Vagina (tissue), 2 donors: ENCODE measurements at regions of chr9 and their contacts with region 1.

Region 1: GRCh38 chr9:128361986-128362646 is 9.1 kb upstream of the URM1 start:
- DNase-seq: no peak
- H3K4me3 ChIP-seq: peak overlapping the region; percentile 36 to 41
- H3K27ac ChIP-seq: peak overlapping the region; percentile 75
- H3K4me1 ChIP-seq: peaks cover 33% of the 10 kb centered on the region
- H3K27me3 ChIP-seq: no peaks in the 10 kb centered on the region
- CTCF ChIP-seq: peak; percentile 24 to 82 (median 70)
- POLR2A ChIP-seq: no peak

Region 2: DNA sequence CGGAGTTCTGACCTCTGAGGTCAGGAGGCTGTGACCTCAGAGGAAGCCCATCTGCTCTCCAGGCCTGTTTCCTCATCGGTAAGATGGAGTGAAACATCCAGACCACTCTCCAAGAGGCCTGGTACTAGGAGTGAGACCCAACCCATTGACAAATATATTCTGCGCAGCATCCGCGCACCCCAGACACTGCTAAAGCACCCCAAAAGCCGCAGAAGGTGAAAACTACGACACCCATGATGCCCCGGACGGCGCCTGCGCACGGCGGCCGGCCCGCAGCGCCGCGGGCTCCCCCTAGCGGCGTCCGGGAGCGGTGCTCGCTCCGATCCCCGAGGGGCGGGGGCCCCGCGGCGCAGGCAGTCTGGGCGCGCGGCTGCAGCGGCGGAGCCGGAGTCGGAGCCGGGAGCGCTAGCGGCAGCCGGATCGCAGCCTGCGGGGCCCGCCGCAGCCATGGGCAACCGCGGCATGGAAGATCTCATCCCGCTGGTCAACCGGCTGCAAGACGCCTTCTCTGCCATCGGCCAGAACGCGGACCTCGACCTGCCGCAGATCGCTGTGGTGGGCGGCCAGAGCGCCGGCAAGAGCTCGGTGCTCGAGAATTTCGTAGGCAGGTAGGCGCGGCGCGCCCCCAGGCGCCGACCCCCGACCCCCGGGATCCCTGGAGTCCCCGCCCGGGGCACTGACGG is 159.0 kb before region 1 on chr9 and contains the start of gene DNM1:
- intact Hi-C with region 1: no loop called
- DNase-seq: no peak
- H3K4me3 ChIP-seq: peak within 1 kb of the TSS; percentile 74 to 89
- H3K27ac ChIP-seq: peak within 1 kb of the TSS; percentile 88
- H3K4me1 ChIP-seq: peaks cover 24% of the 10 kb centered on the region
- H3K27me3 ChIP-seq: no peaks in the 10 kb centered on the region
- CTCF ChIP-seq: peak; percentile 47 to 83 (median 56)
- POLR2A ChIP-seq: peak in 1 of 2 donors; percentile 57
- total RNA-seq, gene DNM1: 33.4 TPM

Region 3: GRCh38 chr9:128412120-128412790 is 50.1 kb after region 1 on chr9:
- intact Hi-C with region 1: loop called (anchors 10 kb)
- DNase-seq: no peak
- H3K4me3 ChIP-seq: no peak overlapping the region
- H3K27ac ChIP-seq: no peak overlapping the region
- H3K4me1 ChIP-seq: no peaks in the 10 kb centered on the region
- H3K27me3 ChIP-seq: no peaks in the 10 kb centered on the region
- CTCF ChIP-seq: peak in 2 of 3 experiments; percentile 19 to 31
- POLR2A ChIP-seq: no peak